ENCODE measurements at regions of chr2 and their contacts with region 1.

Region 1: GRCh38 chr2:3461801-3462492 is 57.4 kb downstream of the ADI1 start:
- DNase-seq: peak in 4 of 10 donors; percentile 15 to 40 (median 34)
- H3K4me3 ChIP-seq: peak overlapping the region in 3 of 59 donors; percentile 4 to 37 (median 12)
- H3K27ac ChIP-seq: peak overlapping the region in 50 of 59 donors; percentile 2 to 81 (median 57)
- H3K27me3 ChIP-seq: no peaks in the 10 kb centered on the region
- CTCF ChIP-seq: peak; percentile 65 to 100 (median 94)

Region 2: GRCh38 chr2:3379647-3380534 is 82.1 kb before region 1 on chr2 and contains the start of gene TRAPPC12:
- intact Hi-C with region 1: loop called in 1 of 2 experiments (anchors 5 kb)
- DNase-seq: peak; percentile 88 to 95 (median 92)
- H3K4me3 ChIP-seq: peak within 1 kb of the TSS; percentile 65 to 99 (median 94)
- H3K27ac ChIP-seq: peak within 1 kb of the TSS; percentile 27 to 99 (median 95)
- H3K27me3 ChIP-seq: no peaks in the 10 kb centered on the region
- CTCF ChIP-seq: peak in 53 of 56 donors; percentile 27 to 76 (median 58)
- total RNA-seq, gene TRAPPC12: 132 to 231 (median 178) TPM

Region 3: GRCh38 chr2:3399829-3400228 is 62.1 kb before region 1 on chr2:
- intact Hi-C with region 1: loop called in 1 of 2 experiments (anchors 10 kb)
- DNase-seq: peak; percentile 66 to 93 (median 89)
- H3K4me3 ChIP-seq: peak overlapping the region in 53 of 59 donors; percentile 6 to 59 (median 36)
- H3K27ac ChIP-seq: peak overlapping the region; percentile 44 to 98 (median 91)
- H3K27me3 ChIP-seq: no peaks in the 10 kb centered on the region
- CTCF ChIP-seq: peak in 4 of 56 donors; percentile 7 to 22 (median 15)

Region 4: DNA sequence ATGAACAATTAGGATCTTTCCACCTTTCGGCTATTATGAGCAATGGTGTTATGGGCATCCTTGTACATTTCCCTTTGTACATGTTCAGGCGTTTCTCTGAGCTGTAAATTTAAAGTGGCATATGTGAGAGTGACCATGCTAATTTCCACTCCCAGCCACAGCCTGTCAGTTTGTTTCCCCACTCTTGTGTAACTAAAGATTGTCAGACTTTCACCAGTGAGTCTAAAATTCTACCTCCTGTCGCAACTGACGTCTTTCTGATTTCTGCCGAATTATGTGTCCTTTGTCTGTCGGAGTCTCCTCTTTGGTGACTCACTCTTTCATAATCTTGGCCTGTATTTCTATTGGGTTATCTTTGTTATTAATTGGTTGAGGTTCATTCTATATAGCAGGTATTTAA is 31.8 kb before region 1 on chr2:
- intact Hi-C with region 1: loop called in 1 of 2 experiments (anchors 2 kb)
- DNase-seq: no peak
- H3K4me3 ChIP-seq: no peak overlapping the region
- H3K27ac ChIP-seq: peak overlapping the region in 6 of 59 donors; percentile 2 to 44 (median 28)
- H3K27me3 ChIP-seq: no peaks in the 10 kb centered on the region
- CTCF ChIP-seq: no peak